GM10248 (cell line): ENCODE measurements at regions of chr6 and their contacts with region 1.

Region 1: GRCh38 chr6:319177-320131 is 27.2 kb downstream of the DUSP22 start:
- DNase-seq: peak; percentile 82
- CTCF ChIP-seq: no peak

Region 2: GRCh38 chr6:305371-306206 is 13.9 kb before region 1 on chr6:
- CTCF ChIA-PET with region 1: interaction called, 38 read pairs
- POLR2A ChIA-PET with region 1: interaction called, 5 read pairs
- DNase-seq: peak; percentile 93
- CTCF ChIP-seq: no peak